HCT116 (cell line): ENCODE measurements at regions of chr14 and their contacts with region 1.

Region 1: DNA sequence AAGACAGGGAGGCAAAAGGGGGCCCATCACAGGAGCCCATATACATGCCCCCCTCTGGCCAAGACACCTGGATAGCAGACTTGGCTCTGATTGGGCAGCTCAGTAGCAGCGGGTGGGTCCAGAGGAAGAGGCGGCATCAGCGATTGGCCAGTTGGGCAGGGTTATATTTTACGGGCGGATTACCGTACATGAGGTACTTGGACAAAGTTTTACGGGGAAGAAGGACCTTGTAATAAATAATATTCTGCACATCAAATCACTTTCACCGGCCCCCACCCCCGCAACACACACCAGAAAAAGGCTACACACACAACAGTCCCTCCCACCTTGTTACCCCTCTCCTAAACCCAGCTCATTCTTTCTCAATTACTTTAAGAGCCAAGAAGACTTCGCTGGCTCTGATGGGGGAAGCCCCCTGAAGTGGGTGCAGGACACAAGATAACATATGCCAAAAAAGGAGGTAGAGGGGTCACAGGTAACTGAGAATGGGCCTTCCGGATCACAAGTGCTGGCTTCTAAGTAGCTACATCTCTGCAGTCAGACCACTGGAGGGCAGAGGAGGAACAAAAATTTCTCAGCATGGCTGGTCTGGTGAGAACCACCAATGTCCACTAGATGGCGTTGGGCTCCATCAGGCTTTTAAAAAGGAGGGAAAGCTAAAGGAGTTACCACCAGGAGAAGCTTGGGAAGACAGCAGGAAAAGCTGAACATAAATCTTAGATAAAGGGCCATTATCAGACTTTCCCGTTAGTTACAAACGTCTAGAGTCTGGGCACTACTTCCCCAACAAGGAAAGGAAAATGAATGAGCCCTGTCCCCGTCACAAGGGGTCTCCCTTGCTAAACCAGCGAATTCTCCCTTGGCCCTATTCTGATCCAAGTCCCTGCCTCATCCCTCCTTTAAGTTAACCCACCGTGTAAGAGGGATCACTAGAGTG is 11.4 kb upstream of the CDH24 start:
- DNase-seq: peak; percentile 88
- ATAC-seq: peak; percentile 76
- H3K4me3 ChIP-seq: no peak overlapping the region
- H3K27ac ChIP-seq: peak overlapping the region; percentile 54
- H3K4me1 ChIP-seq: peaks cover 29 to 36% of the 10 kb centered on the region in 2 experiments
- H3K27me3 ChIP-seq: no peaks in the 10 kb centered on the region
- CTCF ChIP-seq: peak; percentile 99 to 100 (median 99)
- POLR2A ChIP-seq: no peak
- RAD21 ChIP-seq: peak; percentile 80

Region 2: GRCh38 chr14:22888662-22889061 is 180.1 kb before region 1 on chr14:
- CTCF ChIA-PET with region 1: no interaction called
- POLR2A ChIA-PET with region 1: no interaction called
- RAD21 ChIA-PET with region 1: no interaction called
- intact Hi-C with region 1: no loop called
- DNase-seq: no peak
- ATAC-seq: no peak
- H3K4me3 ChIP-seq: no peak overlapping the region; a peak in 1 of 4 replicates
- H3K27ac ChIP-seq: no peak overlapping the region
- H3K4me1 ChIP-seq: peaks cover 22 to 30% of the 10 kb centered on the region in 2 experiments
- H3K27me3 ChIP-seq: no peaks in the 10 kb centered on the region
- CTCF ChIP-seq: no peak
- POLR2A ChIP-seq: no peak
- RAD21 ChIP-seq: no peak

Region 3: DNA sequence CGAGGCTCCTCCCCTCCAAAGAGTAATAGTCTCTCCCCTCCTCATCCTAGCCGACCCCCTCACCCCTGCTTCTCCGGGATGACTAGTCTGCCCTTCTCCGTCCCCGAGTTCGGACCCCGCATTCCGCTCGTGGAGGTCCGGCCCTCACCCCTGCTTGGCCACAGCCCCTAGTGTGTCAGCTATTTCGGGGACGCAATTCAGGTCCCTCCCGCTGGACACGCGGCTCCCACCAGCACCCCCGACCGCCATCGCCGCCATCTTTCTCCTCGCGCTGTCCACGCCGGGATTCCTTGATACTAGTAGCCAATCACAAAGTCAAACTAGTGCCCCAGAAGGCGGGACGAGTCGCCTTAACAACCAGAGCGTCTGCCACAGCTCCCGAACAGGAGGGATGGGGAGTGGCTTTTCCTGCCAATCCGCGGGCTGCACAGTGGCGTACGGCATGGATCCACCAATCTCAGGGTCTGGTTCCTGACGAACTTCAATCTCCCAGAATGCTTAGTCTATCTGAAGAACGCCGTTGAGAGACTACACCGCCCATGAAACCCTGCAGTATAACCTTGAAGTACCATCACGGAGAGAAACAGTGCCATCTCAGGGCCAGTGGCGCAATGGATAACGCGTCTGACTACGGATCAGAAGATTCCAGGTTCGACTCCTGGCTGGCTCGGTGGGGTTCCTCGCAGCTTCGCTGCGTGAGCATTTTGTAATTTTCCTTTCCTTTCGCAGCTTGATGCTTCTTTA is 139.5 kb before region 1 on chr14 and contains the start of gene PRMT5:
- CTCF ChIA-PET with region 1: interaction called, 12 read pairs
- POLR2A ChIA-PET with region 1: no interaction called
- RAD21 ChIA-PET with region 1: no interaction called
- intact Hi-C with region 1: no loop called
- DNase-seq: peak; percentile 99
- ATAC-seq: peak; percentile 91
- H3K4me3 ChIP-seq: peak within 1 kb of the TSS; percentile 75 to 96
- H3K27ac ChIP-seq: peak within 1 kb of the TSS; percentile 83
- H3K4me1 ChIP-seq: peaks cover 31 to 64% of the 10 kb centered on the region in 2 experiments
- H3K27me3 ChIP-seq: no peaks in the 10 kb centered on the region
- CTCF ChIP-seq: no peak
- POLR2A ChIP-seq: peak; percentile 78
- RAD21 ChIP-seq: no peak
- total RNA-seq, gene PRMT5: 186 TPM

Region 4: DNA sequence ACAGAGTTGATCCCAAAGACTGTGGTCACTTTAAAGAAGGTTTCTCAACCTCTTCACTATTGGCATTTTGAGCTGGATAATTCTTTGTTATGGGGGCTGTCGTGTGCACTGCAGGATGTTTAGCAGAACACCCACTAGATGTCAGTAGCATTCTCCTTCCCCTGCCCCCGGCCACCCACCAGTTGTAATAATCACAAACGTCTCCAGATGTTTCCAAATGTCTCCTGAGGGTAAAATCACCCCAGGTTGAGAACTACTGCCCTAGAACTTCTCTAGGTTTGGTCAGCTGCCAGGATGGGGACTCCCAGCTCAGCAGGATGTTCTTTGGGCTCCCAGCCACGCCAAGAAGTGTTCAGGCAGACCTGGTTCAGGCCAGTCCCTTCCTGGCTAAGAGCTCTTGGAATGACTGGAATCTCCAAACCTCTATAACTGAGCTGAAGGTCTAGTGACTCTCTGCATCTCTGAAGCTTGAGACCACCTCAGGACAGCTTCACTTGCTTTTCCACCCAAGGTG is 73.9 kb before region 1 on chr14:
- CTCF ChIA-PET with region 1: interaction called, 33 read pairs
- POLR2A ChIA-PET with region 1: no interaction called
- RAD21 ChIA-PET with region 1: interaction called in 1 of 2 experiments, 3 read pairs
- intact Hi-C with region 1: no loop called
- DNase-seq: no peak
- ATAC-seq: peak; percentile 96
- H3K4me3 ChIP-seq: no peak overlapping the region
- H3K27ac ChIP-seq: 0 out of 2 replicates have a peak overlapping the region, but pooled peaks have one; percentile 18
- H3K4me1 ChIP-seq: peaks cover 4 to 8% of the 10 kb centered on the region in 2 experiments; a peak in 3 of 4 replicates
- H3K27me3 ChIP-seq: no peaks in the 10 kb centered on the region
- CTCF ChIP-seq: peak; percentile 65 to 70 (median 67)
- POLR2A ChIP-seq: no peak
- RAD21 ChIP-seq: peak; percentile 72

Region 5: GRCh38 chr14:23057757-23058653 is 10.7 kb before region 1 on chr14:
- CTCF ChIA-PET with region 1: interaction called, 49 read pairs
- POLR2A ChIA-PET with region 1: interaction called, 7 read pairs
- RAD21 ChIA-PET with region 1: interaction called in 1 of 2 experiments, 5 read pairs
- intact Hi-C with region 1: no loop called
- DNase-seq: peak; percentile 79
- ATAC-seq: peak; percentile 73
- H3K4me3 ChIP-seq: peak overlapping the region; percentile 59 to 61
- H3K27ac ChIP-seq: peak overlapping the region; percentile 84
- H3K4me1 ChIP-seq: peaks cover 24 to 44% of the 10 kb centered on the region in 2 experiments
- H3K27me3 ChIP-seq: no peaks in the 10 kb centered on the region
- CTCF ChIP-seq: peak; percentile 83 to 95 (median 92)
- POLR2A ChIP-seq: no peak
- RAD21 ChIP-seq: peak; percentile 87

Region 6: GRCh38 chr14:23113431-23114119 is 44.8 kb after region 1 on chr14:
- CTCF ChIA-PET with region 1: interaction called, 56 read pairs
- POLR2A ChIA-PET with region 1: interaction called, 10 read pairs
- RAD21 ChIA-PET with region 1: interaction called in 1 of 2 experiments, 3 read pairs
- intact Hi-C with region 1: loop called (anchors 1 kb)
- DNase-seq: no peak
- ATAC-seq: no peak
- H3K4me3 ChIP-seq: no peak overlapping the region
- H3K27ac ChIP-seq: no peak overlapping the region
- H3K4me1 ChIP-seq: peaks cover 12 to 23% of the 10 kb centered on the region in 2 experiments
- H3K27me3 ChIP-seq: peaks cover 20% of the 10 kb centered on the region; the same call in 1 of the 2 replicates
- CTCF ChIP-seq: no peak
- POLR2A ChIP-seq: no peak
- RAD21 ChIP-seq: no peak